HepG2 (cell line): ENCODE measurements at regions of chr1 and their contacts with region 1.

Region 1: DNA sequence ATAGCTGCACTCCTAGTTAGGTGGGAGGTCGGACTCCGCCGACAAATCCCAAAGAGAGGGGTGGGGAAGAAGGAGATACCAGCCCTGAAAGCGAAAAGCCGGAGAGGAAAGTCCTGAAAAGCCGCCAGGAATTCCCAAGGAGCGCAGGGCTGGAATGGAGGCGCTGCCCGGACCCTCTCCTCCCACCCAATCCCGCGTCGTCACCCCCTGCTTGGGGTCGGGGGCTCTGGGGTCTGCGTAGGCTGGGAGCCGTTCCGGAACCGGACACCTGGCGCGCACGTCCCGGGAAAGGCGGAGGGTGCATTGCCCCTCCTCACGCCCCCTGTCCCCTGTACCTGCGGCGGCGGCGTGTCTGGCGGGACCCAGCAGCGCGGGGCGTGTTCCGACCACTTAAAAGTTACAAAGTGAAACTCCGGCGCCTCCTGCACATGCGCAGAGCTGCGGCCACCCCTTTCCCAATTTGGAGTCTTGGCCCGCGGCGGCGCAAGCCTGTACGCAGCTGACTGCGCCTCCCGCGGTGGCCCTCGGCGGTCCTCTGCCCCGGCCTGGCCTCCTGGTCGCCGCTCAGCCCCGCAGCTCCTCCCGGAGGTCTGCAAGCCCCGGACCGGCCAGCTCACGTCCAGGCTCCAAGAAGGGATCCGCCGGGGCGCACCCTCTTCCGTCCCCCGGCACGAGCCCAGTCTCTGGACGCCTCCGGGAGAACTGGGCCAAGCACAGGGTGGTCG is at the start of gene TMEM63A:
- DNase-seq: peak; percentile 82
- ATAC-seq: peak; percentile 79
- H3K4me3 ChIP-seq: peak within 1 kb of the TSS; percentile 91 to 98 (median 93)
- H3K27ac ChIP-seq: peak within 1 kb of the TSS; percentile 80
- H3K4me1 ChIP-seq: peaks cover 73% of the 10 kb centered on the region
- H3K27me3 ChIP-seq: no peaks in the 10 kb centered on the region; a peak in 1 of 5 replicates
- CTCF ChIP-seq: peak; percentile 62
- EP300 ChIP-seq: no peak
- POLR2A ChIP-seq: peak; percentile 58 to 82; a peak in 3 of 4 replicates
- RAD21 ChIP-seq: peak; percentile 70
- total RNA-seq, gene TMEM63A: 6.8 and 23.9 TPM in 2 replicates

Region 2: GRCh38 chr1:225809842-225810578 is 72.1 kb before region 1 on chr1 and contains the start of gene EPHX1:
- CTCF ChIA-PET with region 1: no interaction called
- POLR2A ChIA-PET with region 1: interaction called, 42 read pairs
- in situ Hi-C with region 1: no loop called
- intact Hi-C with region 1: loop called (anchors 2 kb)
- DNase-seq: peak; percentile 76
- ATAC-seq: peak; percentile 79
- H3K4me3 ChIP-seq: peak within 1 kb of the TSS; percentile 68 to 87 (median 80)
- H3K27ac ChIP-seq: peak within 1 kb of the TSS; percentile 69
- H3K4me1 ChIP-seq: peaks cover 54% of the 10 kb centered on the region
- H3K27me3 ChIP-seq: no peaks in the 10 kb centered on the region
- CTCF ChIP-seq: peak; percentile 52
- EP300 ChIP-seq: no peak
- POLR2A ChIP-seq: peak; percentile 65 to 91
- RAD21 ChIP-seq: peak; percentile 49
- total RNA-seq, gene EPHX1: 28.8 and 36.5 TPM in 2 replicates

Region 3: GRCh38 chr1:225871359-225872074 is 10.6 kb before region 1 on chr1:
- CTCF ChIA-PET with region 1: no interaction called
- POLR2A ChIA-PET with region 1: interaction called, 12 read pairs
- in situ Hi-C with region 1: no loop called
- intact Hi-C with region 1: no loop called
- DNase-seq: no peak
- ATAC-seq: no peak
- H3K4me3 ChIP-seq: no peak overlapping the region
- H3K27ac ChIP-seq: no peak overlapping the region
- H3K4me1 ChIP-seq: peaks cover 8% of the 10 kb centered on the region; the same call in 1 of the 2 replicates
- H3K27me3 ChIP-seq: no peaks in the 10 kb centered on the region
- CTCF ChIP-seq: no peak
- EP300 ChIP-seq: no peak
- POLR2A ChIP-seq: no peak
- RAD21 ChIP-seq: no peak

Region 4: GRCh38 chr1:225896937-225897549 is 14.9 kb after region 1 on chr1:
- CTCF ChIA-PET with region 1: no interaction called
- POLR2A ChIA-PET with region 1: interaction called, 29 read pairs
- in situ Hi-C with region 1: no loop called
- intact Hi-C with region 1: no loop called
- DNase-seq: peak; percentile 68
- ATAC-seq: peak; percentile 94
- H3K4me3 ChIP-seq: peak overlapping the region in 2 of 3 experiments; percentile 9 to 46; a peak in 2 of 6 replicates
- H3K27ac ChIP-seq: no peak overlapping the region
- H3K4me1 ChIP-seq: peaks cover 40% of the 10 kb centered on the region
- H3K27me3 ChIP-seq: no peaks in the 10 kb centered on the region
- CTCF ChIP-seq: peak; percentile 33; the same call in 1 of the 2 replicates
- EP300 ChIP-seq: no peak
- POLR2A ChIP-seq: no peak
- RAD21 ChIP-seq: no peak

Region 5: GRCh38 chr1:225911191-225912130 is 29.3 kb after region 1 on chr1:
- CTCF ChIA-PET with region 1: interaction called, 5 read pairs
- POLR2A ChIA-PET with region 1: no interaction called
- in situ Hi-C with region 1: no loop called
- intact Hi-C with region 1: loop called (anchors 5 kb)
- DNase-seq: peak; percentile 17
- ATAC-seq: peak; percentile 88
- H3K4me3 ChIP-seq: peak overlapping the region in 1 of 3 experiments; percentile 39; a peak in 1 of 6 replicates
- H3K27ac ChIP-seq: no peak overlapping the region
- H3K4me1 ChIP-seq: peaks cover 26% of the 10 kb centered on the region
- H3K27me3 ChIP-seq: peaks cover 2 to 6% of the 10 kb centered on the region in 2 experiments; a peak in 4 of 5 replicates
- CTCF ChIP-seq: peak; percentile 78
- EP300 ChIP-seq: no peak
- POLR2A ChIP-seq: no peak
- RAD21 ChIP-seq: peak; percentile 95

Region 6: GRCh38 chr1:225923692-225924555 is 41.8 kb after region 1 on chr1 and contains the start of gene PYCR2:
- CTCF ChIA-PET with region 1: no interaction called
- POLR2A ChIA-PET with region 1: interaction called, 29 read pairs
- in situ Hi-C with region 1: no loop called
- intact Hi-C with region 1: loop called (anchors 5 kb)
- DNase-seq: peak; percentile 91
- ATAC-seq: peak; percentile 97
- H3K4me3 ChIP-seq: peak within 1 kb of the TSS; percentile 81 to 94 (median 82)
- H3K27ac ChIP-seq: peak within 1 kb of the TSS; percentile 89
- H3K4me1 ChIP-seq: peaks cover 22% of the 10 kb centered on the region
- H3K27me3 ChIP-seq: no peaks in the 10 kb centered on the region; a peak in 2 of 5 replicates
- CTCF ChIP-seq: peak; percentile 33; the same call in 1 of the 2 replicates
- EP300 ChIP-seq: no peak
- POLR2A ChIP-seq: peak; percentile 52 to 96
- RAD21 ChIP-seq: no peak
- total RNA-seq, gene PYCR2: 47.8 and 49.5 TPM in 2 replicates

Region 7: DNA sequence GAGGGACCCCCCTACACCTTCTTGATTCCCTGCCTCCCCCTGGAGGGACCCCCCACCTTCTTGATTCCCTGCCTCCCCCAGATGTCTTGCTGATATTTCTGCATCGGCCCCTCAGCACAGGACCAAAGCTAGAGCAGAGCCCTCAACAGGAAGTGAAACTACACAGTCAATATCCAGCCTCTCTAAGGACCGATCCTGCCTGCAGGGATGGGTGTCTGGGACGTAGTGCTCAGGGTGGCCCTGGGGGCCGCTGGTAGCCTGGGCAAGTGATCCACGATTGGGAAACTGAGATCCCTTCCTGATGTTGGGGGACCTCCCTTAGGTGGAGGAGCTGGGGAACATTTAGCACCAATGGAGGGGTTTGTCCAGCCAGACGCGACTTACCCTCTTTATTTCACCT is 62.8 kb after region 1 on chr1:
- CTCF ChIA-PET with region 1: no interaction called
- POLR2A ChIA-PET with region 1: no interaction called
- in situ Hi-C with region 1: no loop called
- intact Hi-C with region 1: no loop called
- DNase-seq: no peak
- ATAC-seq: 0 out of 3 replicates have a peak, but pooled peaks have one; percentile 20
- H3K4me3 ChIP-seq: no peak overlapping the region; a peak in 1 of 6 replicates
- H3K27ac ChIP-seq: no peak overlapping the region
- H3K4me1 ChIP-seq: peaks cover 42% of the 10 kb centered on the region
- H3K27me3 ChIP-seq: peaks cover 7 to 35% of the 10 kb centered on the region in 2 experiments; a peak in 4 of 5 replicates
- CTCF ChIP-seq: no peak
- EP300 ChIP-seq: no peak
- POLR2A ChIP-seq: no peak
- RAD21 ChIP-seq: no peak

Region 8: DNA sequence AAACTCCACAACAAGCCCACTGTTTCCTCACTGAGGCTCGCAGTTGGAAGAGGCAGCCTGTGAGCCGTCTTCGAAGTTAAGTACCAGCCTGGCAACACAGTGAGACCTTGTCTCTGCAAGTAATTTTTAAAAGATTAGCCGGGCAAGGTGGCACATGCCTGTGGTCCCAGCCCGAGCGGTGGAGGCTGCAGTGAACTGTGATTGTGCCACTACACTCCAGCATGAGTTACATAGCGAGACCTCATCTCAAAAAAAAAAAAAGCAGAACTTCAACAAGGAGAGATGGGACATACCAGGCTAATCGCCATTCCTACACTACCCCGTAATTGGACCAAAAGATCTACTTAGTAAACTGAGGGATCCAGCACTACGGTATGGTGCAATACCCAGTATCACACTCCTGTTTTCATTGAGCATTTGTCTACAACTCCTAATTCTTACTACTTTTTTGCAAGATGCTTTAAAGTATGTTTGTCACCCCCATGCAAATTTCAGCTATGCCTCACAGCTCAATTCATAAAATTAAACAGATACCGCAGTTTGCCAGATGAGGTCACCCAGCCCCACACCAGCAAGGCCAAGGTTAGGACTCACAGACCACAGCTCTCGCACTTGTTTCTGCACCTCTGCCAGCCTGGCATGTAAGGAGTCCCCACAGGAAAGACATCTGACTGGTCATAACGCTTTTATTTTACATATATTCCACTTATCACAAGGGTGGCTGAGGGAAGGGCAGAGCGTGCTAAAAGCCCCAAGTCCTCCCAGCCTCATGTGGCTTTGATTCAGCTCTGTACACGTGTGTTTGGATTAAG is 96.0 kb after region 1 on chr1:
- CTCF ChIA-PET with region 1: no interaction called
- POLR2A ChIA-PET with region 1: no interaction called
- in situ Hi-C with region 1: no loop called
- intact Hi-C with region 1: loop called (anchors 10 kb)
- DNase-seq: no peak
- ATAC-seq: no peak
- H3K4me3 ChIP-seq: no peak overlapping the region
- H3K27ac ChIP-seq: no peak overlapping the region
- H3K4me1 ChIP-seq: no peaks in the 10 kb centered on the region
- H3K27me3 ChIP-seq: no peaks in the 10 kb centered on the region
- CTCF ChIP-seq: no peak
- EP300 ChIP-seq: no peak
- POLR2A ChIP-seq: no peak
- RAD21 ChIP-seq: no peak